ENCODE measurements at regions of chr1 and their contacts with region 1.

Region 1: DNA sequence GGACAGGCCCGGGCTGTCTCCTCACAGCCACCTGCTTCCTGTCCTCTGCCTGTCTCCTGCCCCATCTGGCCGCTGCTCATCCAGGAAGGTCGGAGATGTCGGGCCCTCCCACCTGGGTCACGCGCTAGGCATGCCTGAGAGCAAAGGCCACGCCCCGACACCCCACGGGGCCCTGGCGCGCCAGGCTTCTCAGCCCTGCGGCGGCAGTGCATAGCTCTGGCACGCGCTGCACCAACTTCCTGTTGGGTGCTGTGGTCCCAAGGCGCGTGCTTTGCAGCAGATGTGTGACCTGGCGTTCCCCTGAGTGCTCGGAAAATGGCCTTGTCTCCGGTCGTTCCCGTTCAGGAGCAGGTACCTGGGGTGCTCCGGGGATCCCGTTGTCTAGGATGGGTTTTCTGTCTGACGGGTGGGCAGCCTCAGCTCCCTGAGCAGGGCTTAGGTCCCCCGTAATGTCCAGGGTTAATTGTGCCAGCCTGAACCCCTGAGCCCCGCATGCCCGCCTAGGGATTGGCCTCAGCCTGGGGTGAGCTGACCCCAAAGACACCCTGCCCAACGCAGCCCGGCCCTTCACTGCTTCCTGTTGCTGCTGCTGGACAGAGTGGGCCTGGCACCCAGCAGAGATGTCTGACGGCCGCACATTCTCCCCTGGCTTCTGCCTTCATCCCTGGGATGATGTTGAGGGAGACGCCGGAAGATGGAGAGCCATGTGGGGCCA is 19.4 kb upstream of the KCNAB2 start:
- DNase-seq: peak; percentile 89 to 96 (median 90)
- H3K4me3 ChIP-seq: peak overlapping the region; percentile 54 to 89
- H3K4me3 Mint-ChIP-seq: peak overlapping the region; percentile 88 to 99 (median 92)
- H3K27ac ChIP-seq: peak overlapping the region; percentile 89
- H3K27ac Mint-ChIP-seq: peak overlapping the region; percentile 96 to 99 (median 98)
- H3K4me1 ChIP-seq: peaks cover 53% of the 10 kb centered on the region
- H3K4me1 Mint-ChIP-seq: peaks cover 43 to 74% (median 56%) of the 10 kb centered on the region in 4 donors
- H3K27me3 ChIP-seq: no peaks in the 10 kb centered on the region
- H3K27me3 Mint-ChIP-seq: no peaks in the 10 kb centered on the region

Region 2: DNA sequence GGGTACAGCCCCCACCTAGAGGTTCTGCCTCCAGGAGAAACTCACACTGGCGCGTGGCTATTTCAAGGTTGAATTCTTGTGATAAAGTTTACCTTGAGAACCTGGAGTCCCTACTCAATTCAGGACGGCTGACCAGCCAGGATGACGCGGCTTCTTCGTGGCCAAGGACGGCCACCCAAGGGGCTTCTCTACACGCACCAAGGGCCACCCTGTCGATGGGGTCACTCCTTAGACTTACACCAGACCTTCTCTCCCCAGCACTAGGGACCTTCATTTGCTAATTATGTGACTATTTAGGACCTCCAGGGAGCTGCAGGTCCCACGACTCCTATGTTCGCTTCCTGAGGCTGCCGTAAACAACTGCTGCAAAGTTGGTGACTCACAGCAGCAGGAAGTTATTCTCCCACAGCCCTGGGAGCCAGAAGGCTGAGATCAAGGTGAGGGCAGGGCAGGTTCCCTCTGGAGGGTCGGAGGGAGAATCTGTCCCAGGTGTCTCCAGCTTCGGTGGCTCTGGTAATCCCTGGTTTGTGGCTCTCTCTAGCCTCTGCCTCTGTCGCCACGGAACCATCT is 169.9 kb before region 1 on chr1:
- CTCF ChIA-PET with region 1: no interaction called
- POLR2A ChIA-PET with region 1: no interaction called
- intact Hi-C with region 1: no loop called
- DNase-seq: no peak
- H3K4me3 ChIP-seq: no peak overlapping the region
- H3K4me3 Mint-ChIP-seq: no peak overlapping the region
- H3K27ac ChIP-seq: no peak overlapping the region
- H3K27ac Mint-ChIP-seq: no peak overlapping the region
- H3K4me1 ChIP-seq: no peaks in the 10 kb centered on the region
- H3K4me1 Mint-ChIP-seq: peaks cover 0 to 2% (median 0%) of the 10 kb centered on the region in 4 donors
- H3K27me3 ChIP-seq: no peaks in the 10 kb centered on the region
- H3K27me3 Mint-ChIP-seq: peaks cover 0 to 1% of the 10 kb centered on the region in 2 donors

Region 3: DNA sequence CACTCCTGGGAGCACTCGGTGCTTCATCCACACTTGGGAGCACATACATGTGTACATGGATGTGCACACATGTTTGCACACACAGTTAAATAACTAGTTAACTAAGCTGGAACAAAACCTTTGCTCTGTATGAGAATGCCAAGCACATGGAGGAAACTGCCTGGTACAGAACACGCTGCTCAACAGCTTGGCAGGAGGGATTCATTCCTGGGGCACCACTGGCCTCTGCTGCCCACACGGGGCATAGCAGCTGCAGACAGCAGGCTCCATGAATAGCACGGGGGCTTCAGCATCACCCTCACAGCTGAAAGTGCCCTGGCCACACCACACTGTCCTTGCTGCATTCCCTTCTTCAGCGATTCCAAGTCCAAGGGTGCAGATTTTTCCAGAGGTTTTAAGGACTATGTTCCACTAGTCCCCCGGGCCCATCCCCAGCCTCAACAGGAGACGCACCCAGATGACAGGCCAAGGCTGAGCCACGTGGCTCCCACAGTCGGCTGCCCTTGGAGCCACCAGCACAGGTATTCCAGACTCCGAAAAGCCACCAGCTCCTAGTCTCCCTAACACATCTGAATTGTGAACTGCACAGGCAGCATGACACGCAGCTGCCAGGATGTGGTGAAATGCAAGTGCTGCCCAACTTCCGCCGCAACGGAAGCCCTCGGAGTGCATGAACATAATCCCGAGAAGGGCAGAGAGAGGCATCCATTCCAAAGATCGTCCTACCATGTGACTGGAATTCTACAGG is 50.9 kb before region 1 on chr1:
- CTCF ChIA-PET with region 1: no interaction called
- POLR2A ChIA-PET with region 1: no interaction called
- intact Hi-C with region 1: loop called (anchors 10 kb)
- DNase-seq: peak in 4 of 5 donors; percentile 13 to 47 (median 18)
- H3K4me3 ChIP-seq: no peak overlapping the region
- H3K4me3 Mint-ChIP-seq: peak overlapping the region in 3 of 8 donors; percentile 38 to 68 (median 60)
- H3K27ac ChIP-seq: no peak overlapping the region
- H3K27ac Mint-ChIP-seq: peak overlapping the region in 4 of 7 donors; percentile 4 to 77 (median 45)
- H3K4me1 ChIP-seq: peaks cover 8% of the 10 kb centered on the region
- H3K4me1 Mint-ChIP-seq: peaks cover 6 to 15% (median 11%) of the 10 kb centered on the region in 4 donors
- H3K27me3 ChIP-seq: no peaks in the 10 kb centered on the region
- H3K27me3 Mint-ChIP-seq: no peaks in the 10 kb centered on the region

Region 4: DNA sequence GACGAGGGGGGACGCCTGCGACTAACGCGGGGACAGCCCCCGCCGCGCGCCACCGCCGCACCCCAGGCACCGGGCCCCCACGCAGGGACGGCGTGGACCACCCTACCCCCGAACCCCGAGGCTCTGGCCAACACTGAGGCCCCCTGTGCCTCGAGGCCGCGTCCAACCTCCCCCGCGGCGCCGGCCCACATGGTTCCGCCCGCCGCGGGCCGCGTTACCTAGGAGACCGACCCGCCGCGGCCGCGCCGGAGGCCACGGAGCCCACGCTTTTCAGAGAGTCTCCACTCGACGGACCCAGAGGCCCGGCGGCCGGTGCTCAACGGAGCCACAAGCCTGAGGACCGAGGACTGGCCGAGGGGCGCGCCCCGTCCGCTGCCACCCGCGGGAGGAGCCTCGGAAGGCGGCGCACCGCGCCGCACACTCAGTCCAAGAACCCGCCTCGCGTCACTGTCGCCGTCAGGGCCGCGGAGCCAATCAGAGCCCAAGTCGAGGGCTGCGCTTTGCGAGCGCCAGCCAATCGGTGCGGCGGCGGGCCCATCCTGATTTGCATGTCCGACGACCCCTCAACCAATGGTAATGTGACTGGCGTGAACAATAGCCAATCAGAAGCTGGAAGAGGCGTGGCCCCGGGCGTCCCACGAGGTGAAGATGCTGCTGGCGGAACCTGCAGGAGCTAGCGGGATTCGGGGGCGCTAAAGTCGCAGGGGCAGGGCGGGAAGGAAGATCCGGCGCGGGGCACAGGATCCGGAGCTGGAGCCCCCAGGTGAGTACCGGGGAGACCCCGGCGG is 34.0 kb before region 1 on chr1 and contains the start of gene NPHP4:
- CTCF ChIA-PET with region 1: interaction called, 16 read pairs
- POLR2A ChIA-PET with region 1: interaction called, 179 read pairs
- intact Hi-C with region 1: loop called (anchors 1 kb)
- DNase-seq: peak; percentile 99
- H3K4me3 ChIP-seq: peak within 1 kb of the TSS; percentile 86 to 92
- H3K4me3 Mint-ChIP-seq: peak within 1 kb of the TSS; percentile 95 to 98 (median 96)
- H3K27ac ChIP-seq: peak within 1 kb of the TSS; percentile 96
- H3K27ac Mint-ChIP-seq: peak within 1 kb of the TSS; percentile 97 to 99 (median 98)
- H3K4me1 ChIP-seq: peaks cover 37% of the 10 kb centered on the region
- H3K4me1 Mint-ChIP-seq: peaks cover 13 to 39% (median 30%) of the 10 kb centered on the region in 4 donors
- H3K27me3 ChIP-seq: no peaks in the 10 kb centered on the region
- H3K27me3 Mint-ChIP-seq: no peaks in the 10 kb centered on the region
- total RNA-seq, gene NPHP4: 7.6 to 9.6 TPM

Measured in CD4-positive, alpha-beta memory T cell (primary cell).